Activated naive CD4-positive, alpha-beta T cell treated with anti-CD3 and anti-CD28 coated beads for 36 hours (primary cell): ENCODE measurements at regions of chr6 and their contacts with region 1.

Region 1: GRCh38 chr6:27809939-27810767 is 102.0 kb downstream of the OR2B2 start:
- DNase-seq: peak; percentile 81
- H3K4me3 Mint-ChIP-seq: peak overlapping the region; percentile 93
- H3K27ac Mint-ChIP-seq: peak overlapping the region; percentile 95
- H3K4me1 Mint-ChIP-seq: peaks cover 41% of the 10 kb centered on the region
- H3K27me3 Mint-ChIP-seq: peaks cover 3% of the 10 kb centered on the region

Region 2: DNA sequence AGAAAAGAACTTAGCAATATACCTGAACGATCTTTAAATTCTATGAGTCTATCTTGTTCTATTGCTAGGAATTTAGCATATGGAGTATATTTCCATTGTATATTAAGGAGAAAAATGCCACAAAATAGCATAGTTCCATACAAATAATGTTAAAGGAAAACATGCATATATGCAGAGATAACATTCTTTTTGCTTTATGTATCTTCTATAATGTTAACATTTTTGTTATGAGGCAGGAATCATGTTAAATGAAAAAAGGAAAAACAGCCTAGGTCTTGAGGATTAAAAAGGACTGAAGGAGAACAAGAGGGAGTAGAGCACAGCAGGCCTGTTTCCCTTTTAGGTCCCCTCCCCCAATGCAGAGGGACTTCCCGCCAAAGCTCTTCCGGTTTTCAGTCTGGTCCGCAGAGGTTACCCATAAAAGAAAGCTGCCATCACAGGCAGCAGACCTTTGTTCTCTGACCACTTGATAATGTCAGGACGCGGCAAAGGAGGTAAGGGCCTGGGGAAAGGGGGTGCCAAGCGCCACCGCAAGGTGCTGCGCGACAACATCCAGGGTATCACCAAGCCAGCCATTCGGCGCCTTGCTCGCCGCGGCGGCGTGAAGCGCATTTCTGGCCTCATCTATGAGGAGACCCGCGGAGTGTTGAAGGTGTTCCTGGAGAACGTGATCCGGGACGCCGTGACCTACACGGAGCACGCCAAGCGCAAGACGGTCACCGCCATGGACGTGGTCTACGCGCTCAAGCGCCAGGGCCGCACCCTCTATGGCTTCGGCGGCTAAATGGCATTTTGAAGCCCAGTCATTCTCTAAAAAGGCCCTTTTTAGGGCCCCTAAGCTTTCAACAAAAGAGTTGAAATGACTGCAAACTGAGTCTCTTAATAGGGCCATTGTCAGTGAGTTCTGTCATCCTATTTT is 671.1 kb before region 1 on chr6:
- CTCF ChIA-PET with region 1: no interaction called
- intact Hi-C with region 1: loop called (anchors 2 kb)
- DNase-seq: peak; percentile 86
- H3K4me3 Mint-ChIP-seq: peak overlapping the region; percentile 96
- H3K27ac Mint-ChIP-seq: peak overlapping the region; percentile 99
- H3K4me1 Mint-ChIP-seq: peaks cover 44% of the 10 kb centered on the region
- H3K27me3 Mint-ChIP-seq: no peaks in the 10 kb centered on the region

Region 3: GRCh38 chr6:27146706-27147505 is 663.2 kb before region 1 on chr6:
- CTCF ChIA-PET with region 1: no interaction called
- intact Hi-C with region 1: loop called (anchors 1 kb)
- DNase-seq: peak; percentile 87
- H3K4me3 Mint-ChIP-seq: no peak overlapping the region
- H3K27ac Mint-ChIP-seq: no peak overlapping the region
- H3K4me1 Mint-ChIP-seq: peaks cover 11% of the 10 kb centered on the region
- H3K27me3 Mint-ChIP-seq: no peaks in the 10 kb centered on the region

Region 4: DNA sequence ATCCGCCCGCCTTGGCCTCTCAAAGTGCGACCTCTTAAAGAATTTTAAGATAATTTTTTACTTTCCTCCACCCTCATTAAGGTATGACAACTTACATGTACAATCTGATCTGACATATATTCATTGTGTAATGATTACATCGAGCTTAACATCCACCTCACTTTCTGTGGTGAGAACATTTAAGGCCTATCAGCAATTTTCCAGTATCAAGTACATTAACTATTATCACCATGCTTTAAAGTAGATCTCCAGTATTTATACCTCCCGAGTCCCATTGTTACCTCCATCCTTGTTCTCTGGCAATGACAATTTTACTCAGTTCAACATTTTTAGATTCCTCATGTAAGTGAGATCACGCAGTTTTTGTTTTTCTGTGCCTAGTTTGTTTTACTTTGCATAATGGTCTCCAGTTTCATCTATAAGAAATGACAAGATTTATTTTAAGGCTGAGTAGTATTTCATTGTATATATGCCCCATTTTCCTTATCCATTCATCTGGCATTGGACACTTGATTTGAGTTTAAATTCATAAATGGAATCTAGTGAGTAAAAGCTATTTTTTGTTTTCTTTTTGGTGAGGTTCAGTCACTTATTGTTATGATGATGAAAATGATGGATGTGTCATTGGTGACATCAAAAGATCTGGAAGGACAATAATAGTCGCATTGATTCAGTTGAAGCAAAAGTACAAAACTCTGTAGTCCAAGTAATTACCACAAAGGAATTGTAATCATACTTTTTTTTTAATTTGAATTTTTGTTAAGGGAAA is 15.1 kb after region 1 on chr6:
- CTCF ChIA-PET with region 1: no interaction called
- intact Hi-C with region 1: loop called (anchors 1 kb)
- DNase-seq: no peak
- H3K4me3 Mint-ChIP-seq: peak overlapping the region; percentile 89
- H3K27ac Mint-ChIP-seq: peak overlapping the region; percentile 98
- H3K4me1 Mint-ChIP-seq: peaks cover 24% of the 10 kb centered on the region
- H3K27me3 Mint-ChIP-seq: no peaks in the 10 kb centered on the region

Region 5: GRCh38 chr6:27864906-27865849 is 55.0 kb after region 1 on chr6:
- CTCF ChIA-PET with region 1: interaction called, 7 read pairs
- intact Hi-C with region 1: loop called (anchors 1 kb)
- DNase-seq: peak; percentile 84
- H3K4me3 Mint-ChIP-seq: peak overlapping the region; percentile 97
- H3K27ac Mint-ChIP-seq: peak overlapping the region; percentile 96
- H3K4me1 Mint-ChIP-seq: peaks cover 26% of the 10 kb centered on the region
- H3K27me3 Mint-ChIP-seq: peaks cover 8% of the 10 kb centered on the region

Region 6: GRCh38 chr6:28080631-28081485 is 270.7 kb after region 1 on chr6:
- CTCF ChIA-PET with region 1: no interaction called
- intact Hi-C with region 1: loop called (anchors 5 kb)
- DNase-seq: peak; percentile 94
- H3K4me3 Mint-ChIP-seq: peak overlapping the region; percentile 97
- H3K27ac Mint-ChIP-seq: peak overlapping the region; percentile 96
- H3K4me1 Mint-ChIP-seq: peaks cover 15% of the 10 kb centered on the region
- H3K27me3 Mint-ChIP-seq: no peaks in the 10 kb centered on the region

Region 7: GRCh38 chr6:28335564-28336283 is 525.6 kb after region 1 on chr6 and contains the start of gene ZSCAN31:
- CTCF ChIA-PET with region 1: no interaction called
- intact Hi-C with region 1: loop called (anchors 5 kb)
- DNase-seq: peak; percentile 90
- H3K4me3 Mint-ChIP-seq: no peak within 1 kb of the TSS
- H3K27ac Mint-ChIP-seq: no peak within 1 kb of the TSS
- H3K4me1 Mint-ChIP-seq: peaks cover 4% of the 10 kb centered on the region
- H3K27me3 Mint-ChIP-seq: no peaks in the 10 kb centered on the region
- total RNA-seq, gene ZSCAN31: 0.62 to 0.89 TPM